Activated CD4-positive, alpha-beta T cell treated with anti-CD3 and anti-CD28 coated beads for 36 hours (primary cell): ENCODE measurements at regions of chr2 and their contacts with region 1.

Region 1: GRCh38 chr2:96509114-96509846 is 4.1 kb upstream of the NEURL3 start:
- DNase-seq: peak; percentile 87
- ATAC-seq: peak; percentile 58
- H3K4me3 Mint-ChIP-seq: no peak overlapping the region
- H3K27ac Mint-ChIP-seq: peak overlapping the region; percentile 39
- H3K4me1 Mint-ChIP-seq: peaks cover 18% of the 10 kb centered on the region
- H3K27me3 Mint-ChIP-seq: peaks cover 12% of the 10 kb centered on the region

Region 2: DNA sequence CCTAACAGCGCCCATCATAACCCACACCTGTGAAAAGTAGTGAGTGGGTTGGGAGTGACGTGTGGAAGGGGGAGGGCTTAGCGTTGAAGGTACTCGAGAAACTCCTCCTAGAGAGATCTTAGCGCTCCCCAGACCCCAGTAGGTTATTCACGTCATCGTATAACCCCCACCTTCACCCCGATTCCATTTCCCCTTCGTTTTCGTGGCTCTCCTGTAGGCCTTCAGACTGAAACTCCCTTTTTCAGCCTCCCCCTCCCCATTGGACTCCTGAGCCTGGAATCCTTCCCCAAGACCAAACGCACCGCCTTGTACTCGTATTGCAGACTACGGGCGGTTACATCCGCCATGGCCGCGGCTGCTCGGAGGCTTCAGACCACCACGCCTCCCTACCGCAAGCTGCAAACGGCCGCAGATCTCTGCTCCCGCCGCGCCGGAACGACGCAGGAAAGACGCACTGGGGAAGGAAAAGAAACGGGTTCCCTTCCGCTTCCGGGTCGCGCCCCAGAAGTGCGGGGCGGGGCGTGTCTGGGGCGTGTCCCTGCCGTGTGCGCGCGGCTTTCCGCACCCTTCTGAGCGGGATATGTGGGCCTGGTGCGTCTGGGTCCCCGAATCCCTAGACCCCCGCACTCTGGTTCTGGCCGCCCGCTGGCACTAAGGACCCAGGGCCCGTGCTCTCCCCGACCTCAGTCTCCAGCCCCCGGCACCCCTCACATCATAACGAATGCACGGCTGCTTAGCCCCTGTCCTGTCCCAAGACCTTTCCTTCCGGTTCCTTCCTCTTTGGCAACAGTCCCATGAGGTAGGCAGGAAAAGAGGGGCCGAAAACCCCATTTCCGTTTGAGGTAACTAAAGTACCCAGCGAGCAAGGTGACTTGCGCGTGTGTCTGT is 203.9 kb before region 1 on chr2 and contains the start of gene SNRNP200:
- CTCF ChIA-PET with region 1: interaction called, 3 read pairs
- POLR2A ChIA-PET with region 1: no interaction called
- intact Hi-C with region 1: loop called in 1 of 2 experiments (anchors 1 kb)
- DNase-seq: peak; percentile 96
- ATAC-seq: peak; percentile 97
- H3K4me3 Mint-ChIP-seq: peak within 1 kb of the TSS; percentile 100
- H3K27ac Mint-ChIP-seq: peak within 1 kb of the TSS; percentile 99
- H3K4me1 Mint-ChIP-seq: peaks cover 46% of the 10 kb centered on the region
- H3K27me3 Mint-ChIP-seq: no peaks in the 10 kb centered on the region
- total RNA-seq, gene SNRNP200: 176 to 198 TPM

Region 3: DNA sequence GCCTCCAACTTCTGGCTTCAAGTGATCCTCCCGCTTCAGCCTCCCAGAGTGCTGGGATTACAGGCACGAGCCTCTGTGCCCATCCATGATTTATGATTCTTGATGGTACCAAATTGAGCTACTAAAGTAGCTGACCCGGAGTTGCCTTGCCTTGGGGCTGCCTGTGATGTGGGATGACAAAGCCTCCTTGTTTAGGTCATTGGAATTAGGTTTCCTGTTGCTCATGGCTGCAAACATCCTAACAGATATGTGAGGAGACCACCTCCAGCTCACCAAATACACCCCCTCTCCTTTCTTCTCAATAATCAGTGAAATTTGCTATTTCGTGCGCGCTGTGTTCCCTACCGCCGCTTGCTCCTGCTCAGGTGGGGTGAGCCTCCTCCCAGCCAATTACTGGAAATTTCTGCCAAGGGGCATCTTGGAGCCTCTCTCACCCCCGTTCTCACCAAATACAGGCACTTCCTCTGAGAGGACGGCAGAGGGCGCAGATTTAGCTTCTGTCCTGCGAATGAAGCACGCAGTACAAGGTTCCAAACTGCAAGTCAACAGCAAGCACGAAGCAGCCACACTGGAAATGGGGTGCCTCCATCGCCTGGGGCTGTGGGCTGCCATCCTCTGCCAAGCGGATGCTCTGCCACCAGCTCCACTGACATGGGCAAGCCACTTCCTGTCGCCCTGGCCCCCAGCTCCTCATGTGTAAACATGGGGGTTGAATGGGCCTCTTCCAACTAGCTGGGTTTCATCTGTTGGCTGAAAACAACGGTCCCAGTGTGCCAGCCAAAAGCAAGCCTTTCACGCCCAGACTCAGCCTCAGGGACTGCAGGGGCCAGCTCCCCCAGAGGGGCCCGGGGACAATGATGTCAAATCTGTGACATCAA is 102.0 kb before region 1 on chr2:
- CTCF ChIA-PET with region 1: interaction called, 128 read pairs
- POLR2A ChIA-PET with region 1: interaction called, 3 read pairs
- intact Hi-C with region 1: loop called (anchors 1 kb)
- DNase-seq: peak; percentile 83
- ATAC-seq: peak; percentile 93
- H3K4me3 Mint-ChIP-seq: no peak overlapping the region
- H3K27ac Mint-ChIP-seq: peak overlapping the region; percentile 87
- H3K4me1 Mint-ChIP-seq: peaks cover 38% of the 10 kb centered on the region
- H3K27me3 Mint-ChIP-seq: no peaks in the 10 kb centered on the region

Region 4: DNA sequence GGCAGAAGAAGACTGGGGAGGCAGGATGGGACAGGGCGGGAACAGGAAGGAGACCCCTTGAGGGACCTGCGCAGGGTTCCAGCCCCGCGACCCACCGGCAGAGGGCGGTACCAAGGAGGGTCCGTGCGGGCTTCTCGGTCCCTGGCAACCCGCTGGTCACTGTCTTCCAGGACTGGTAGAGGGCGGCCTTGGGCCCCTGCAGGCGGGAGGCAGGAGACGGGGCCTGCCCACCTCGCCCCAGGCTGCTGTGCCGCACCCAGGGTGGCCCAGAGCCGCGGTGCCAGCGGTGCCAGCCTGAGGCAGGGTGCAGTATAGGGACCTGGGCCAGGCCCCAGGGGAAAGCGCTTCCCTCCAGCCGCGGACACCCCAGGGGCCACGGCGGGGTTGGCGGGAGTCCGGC is 38.6 kb before region 1 on chr2:
- CTCF ChIA-PET with region 1: interaction called, 8 read pairs
- POLR2A ChIA-PET with region 1: no interaction called
- intact Hi-C with region 1: loop called (anchors 1 kb)
- DNase-seq: peak; percentile 78
- ATAC-seq: peak; percentile 87
- H3K4me3 Mint-ChIP-seq: no peak overlapping the region
- H3K27ac Mint-ChIP-seq: no peak overlapping the region
- H3K4me1 Mint-ChIP-seq: peaks cover 6% of the 10 kb centered on the region
- H3K27me3 Mint-ChIP-seq: no peaks in the 10 kb centered on the region

Region 5: DNA sequence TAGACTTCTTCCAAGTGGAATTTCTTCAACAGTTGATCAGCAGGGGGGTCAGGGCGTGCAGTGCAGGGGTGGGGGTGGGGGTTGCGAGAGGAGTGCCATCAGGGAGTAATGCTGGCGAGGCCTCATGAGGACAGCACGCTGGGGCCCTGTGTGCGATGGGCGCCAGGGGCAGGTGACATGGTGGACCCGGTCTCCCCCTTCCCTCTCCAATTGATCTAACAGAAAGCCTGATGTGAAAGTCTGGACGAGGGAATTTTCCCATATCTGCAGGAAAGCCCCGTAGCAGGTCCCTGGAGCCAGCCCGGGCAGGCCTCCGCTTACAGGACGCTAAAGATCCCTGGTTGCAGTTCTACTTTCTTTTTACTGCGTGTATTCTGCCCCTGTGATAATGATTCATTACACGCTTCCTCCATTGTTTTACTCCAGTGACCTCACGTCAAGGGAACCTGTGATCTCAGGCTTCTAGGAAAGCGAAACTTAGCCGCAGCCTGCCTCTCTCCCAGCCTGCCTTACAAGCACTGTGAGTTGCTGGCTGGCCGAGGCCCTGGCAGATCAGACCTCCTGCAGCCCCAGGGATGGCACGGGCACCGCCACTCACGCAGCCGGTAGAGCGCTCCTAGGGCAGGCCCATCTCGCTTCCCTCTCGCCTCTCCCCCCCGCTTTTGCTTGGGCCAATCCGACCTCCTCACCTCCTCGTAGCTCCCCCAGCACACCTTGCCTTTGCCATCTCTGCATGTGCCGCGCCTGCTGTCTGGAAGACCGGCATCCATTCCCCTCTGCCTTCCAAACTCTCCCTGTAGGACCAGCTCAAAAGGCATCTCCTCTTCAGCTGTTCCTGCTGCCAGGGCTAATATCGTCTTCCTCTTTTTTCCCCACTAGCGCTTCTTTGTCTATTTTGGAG is 23.3 kb before region 1 on chr2:
- CTCF ChIA-PET with region 1: interaction called, 20 read pairs
- POLR2A ChIA-PET with region 1: no interaction called
- intact Hi-C with region 1: loop called in 1 of 2 experiments (anchors 1 kb)
- DNase-seq: peak; percentile 94
- ATAC-seq: peak; percentile 95
- H3K4me3 Mint-ChIP-seq: peak overlapping the region; percentile 90
- H3K27ac Mint-ChIP-seq: peak overlapping the region; percentile 95
- H3K4me1 Mint-ChIP-seq: peaks cover 48% of the 10 kb centered on the region
- H3K27me3 Mint-ChIP-seq: no peaks in the 10 kb centered on the region

Region 6: GRCh38 chr2:96520231-96520630 is 11.0 kb after region 1 on chr2:
- CTCF ChIA-PET with region 1: interaction called, 12 read pairs
- POLR2A ChIA-PET with region 1: interaction called, 3 read pairs
- intact Hi-C with region 1: no loop called
- DNase-seq: no peak
- ATAC-seq: no peak
- H3K4me3 Mint-ChIP-seq: no peak overlapping the region
- H3K27ac Mint-ChIP-seq: no peak overlapping the region
- H3K4me1 Mint-ChIP-seq: peaks cover 30% of the 10 kb centered on the region
- H3K27me3 Mint-ChIP-seq: no peaks in the 10 kb centered on the region

Region 7: GRCh38 chr2:96554293-96555145 is 45.2 kb after region 1 on chr2:
- CTCF ChIA-PET with region 1: interaction called, 11 read pairs
- POLR2A ChIA-PET with region 1: interaction called, 3 read pairs
- intact Hi-C with region 1: loop called (anchors 1 to 2 kb)
- DNase-seq: peak; percentile 86
- ATAC-seq: peak; percentile 42
- H3K4me3 Mint-ChIP-seq: peak overlapping the region; percentile 32
- H3K27ac Mint-ChIP-seq: peak overlapping the region; percentile 75
- H3K4me1 Mint-ChIP-seq: peaks cover 29% of the 10 kb centered on the region
- H3K27me3 Mint-ChIP-seq: no peaks in the 10 kb centered on the region

Region 8: GRCh38 chr2:96608469-96609455 is 99.5 kb after region 1 on chr2:
- CTCF ChIA-PET with region 1: no interaction called
- POLR2A ChIA-PET with region 1: no interaction called
- intact Hi-C with region 1: no loop called
- DNase-seq: no peak
- ATAC-seq: no peak
- H3K4me3 Mint-ChIP-seq: no peak overlapping the region
- H3K27ac Mint-ChIP-seq: no peak overlapping the region
- H3K4me1 Mint-ChIP-seq: no peaks in the 10 kb centered on the region
- H3K27me3 Mint-ChIP-seq: no peaks in the 10 kb centered on the region